Activated B cell treated with CpG ODN at 0.5 μM for 24 hours (primary cell): ENCODE measurements at regions of chr9 and their contacts with region 1.

Region 1: DNA sequence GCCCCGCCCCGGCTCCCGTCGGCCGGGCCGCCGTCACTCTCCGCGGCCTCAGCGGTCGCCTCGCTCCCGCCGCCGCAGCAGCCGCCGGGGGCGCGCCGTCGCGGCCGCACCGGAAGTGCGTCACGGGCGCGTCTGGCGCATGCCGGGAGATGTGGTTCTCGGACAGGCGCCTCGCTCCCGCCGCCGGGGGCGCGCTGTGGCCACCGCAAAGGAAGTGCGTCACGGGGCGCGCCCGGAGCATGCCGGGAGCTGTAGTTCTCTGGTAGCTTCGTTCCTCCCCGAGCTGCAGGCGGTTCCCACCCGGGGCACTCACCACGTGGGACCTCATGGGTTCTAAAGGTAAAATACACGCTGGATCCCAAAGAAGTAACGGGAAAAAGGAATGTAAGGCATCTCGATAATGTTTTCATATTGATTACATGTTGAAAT is at the start of gene UBAC1:
- DNase-seq: peak; percentile 99
- ATAC-seq: peak; percentile 91
- H3K4me3 Mint-ChIP-seq: peak within 1 kb of the TSS; percentile 87
- H3K27ac Mint-ChIP-seq: peak within 1 kb of the TSS; percentile 76
- H3K4me1 Mint-ChIP-seq: peaks cover 29% of the 10 kb centered on the region
- H3K27me3 Mint-ChIP-seq: peaks cover 9% of the 10 kb centered on the region
- CTCF ChIP-seq: no peak
- total RNA-seq, gene UBAC1: 24.3 and 25.5 TPM in 2 replicates

Region 2: GRCh38 chr9:135864447-135865049 is 96.7 kb before region 1 on chr9:
- CTCF ChIA-PET with region 1: interaction called, 9 read pairs
- POLR2A ChIA-PET with region 1: no interaction called
- intact Hi-C with region 1: loop called (anchors 2 kb)
- DNase-seq: peak; percentile 54
- ATAC-seq: peak; percentile 42
- H3K4me3 Mint-ChIP-seq: no peak overlapping the region
- H3K27ac Mint-ChIP-seq: no peak overlapping the region
- H3K4me1 Mint-ChIP-seq: peaks cover 7% of the 10 kb centered on the region
- H3K27me3 Mint-ChIP-seq: no peaks in the 10 kb centered on the region
- CTCF ChIP-seq: peak; percentile 36

Region 3: DNA sequence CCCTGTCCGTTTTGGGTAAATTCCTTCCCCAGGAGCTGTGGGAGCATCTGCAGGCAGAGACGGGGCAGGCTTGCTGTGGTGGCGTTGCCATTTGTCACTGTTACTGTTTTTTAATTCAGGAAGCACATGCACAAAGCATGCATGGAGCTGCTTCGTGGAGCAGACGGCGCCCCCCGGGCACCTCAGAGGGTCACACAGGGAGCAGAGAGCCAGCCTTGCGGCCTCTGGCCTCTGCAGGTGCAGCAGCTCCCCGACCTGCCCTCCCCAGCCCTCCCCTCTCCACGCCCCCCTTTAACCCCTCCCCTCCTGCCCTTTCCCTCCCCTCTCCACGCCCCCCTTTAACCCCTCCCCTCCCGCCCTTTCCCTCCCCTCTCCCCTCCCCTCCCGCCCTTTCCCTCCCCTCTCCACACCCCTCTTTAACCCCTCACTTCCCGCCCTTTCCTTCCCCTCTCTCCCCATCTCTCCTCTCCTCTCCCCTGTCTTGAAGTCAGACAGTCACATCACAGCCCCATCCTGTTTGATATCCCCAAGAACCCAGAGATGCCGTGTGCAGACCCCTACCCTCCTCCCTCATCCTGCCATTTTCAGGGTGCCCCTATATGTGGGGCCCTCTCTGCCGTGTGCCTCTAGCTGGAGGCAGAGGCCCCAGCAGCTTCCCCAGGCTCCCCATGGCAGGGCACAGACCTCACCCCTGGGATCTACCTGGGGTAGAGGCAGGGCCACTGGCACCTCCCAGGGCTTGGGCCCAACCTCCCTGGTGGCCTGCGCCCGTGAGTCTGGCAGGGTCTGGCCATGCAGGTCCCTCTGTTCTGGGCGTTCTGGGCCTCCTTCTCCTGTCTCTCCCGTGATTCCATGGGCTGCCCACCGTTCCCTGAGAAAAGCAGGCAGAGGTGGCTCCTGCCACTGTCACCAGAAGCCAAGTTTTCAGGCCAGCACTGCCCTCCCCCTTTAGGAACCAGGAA is 29.5 kb after region 1 on chr9:
- CTCF ChIA-PET with region 1: no interaction called
- POLR2A ChIA-PET with region 1: no interaction called
- intact Hi-C with region 1: loop called (anchors 2 kb)
- DNase-seq: no peak
- ATAC-seq: peak; percentile 77
- H3K4me3 Mint-ChIP-seq: peak overlapping the region; percentile 38
- H3K27ac Mint-ChIP-seq: peak overlapping the region; percentile 30
- H3K4me1 Mint-ChIP-seq: peaks cover 20% of the 10 kb centered on the region
- H3K27me3 Mint-ChIP-seq: no peaks in the 10 kb centered on the region
- CTCF ChIP-seq: no peak

Region 4: GRCh38 chr9:136267261-136268111 is 306.2 kb after region 1 on chr9:
- CTCF ChIA-PET with region 1: no interaction called
- POLR2A ChIA-PET with region 1: no interaction called
- intact Hi-C with region 1: loop called (anchors 5 kb)
- DNase-seq: peak; percentile 72
- ATAC-seq: peak; percentile 97
- H3K4me3 Mint-ChIP-seq: peak overlapping the region; percentile 80
- H3K27ac Mint-ChIP-seq: peak overlapping the region; percentile 70
- H3K4me1 Mint-ChIP-seq: peaks cover 11% of the 10 kb centered on the region
- H3K27me3 Mint-ChIP-seq: no peaks in the 10 kb centered on the region
- CTCF ChIP-seq: no peak

Region 5: DNA sequence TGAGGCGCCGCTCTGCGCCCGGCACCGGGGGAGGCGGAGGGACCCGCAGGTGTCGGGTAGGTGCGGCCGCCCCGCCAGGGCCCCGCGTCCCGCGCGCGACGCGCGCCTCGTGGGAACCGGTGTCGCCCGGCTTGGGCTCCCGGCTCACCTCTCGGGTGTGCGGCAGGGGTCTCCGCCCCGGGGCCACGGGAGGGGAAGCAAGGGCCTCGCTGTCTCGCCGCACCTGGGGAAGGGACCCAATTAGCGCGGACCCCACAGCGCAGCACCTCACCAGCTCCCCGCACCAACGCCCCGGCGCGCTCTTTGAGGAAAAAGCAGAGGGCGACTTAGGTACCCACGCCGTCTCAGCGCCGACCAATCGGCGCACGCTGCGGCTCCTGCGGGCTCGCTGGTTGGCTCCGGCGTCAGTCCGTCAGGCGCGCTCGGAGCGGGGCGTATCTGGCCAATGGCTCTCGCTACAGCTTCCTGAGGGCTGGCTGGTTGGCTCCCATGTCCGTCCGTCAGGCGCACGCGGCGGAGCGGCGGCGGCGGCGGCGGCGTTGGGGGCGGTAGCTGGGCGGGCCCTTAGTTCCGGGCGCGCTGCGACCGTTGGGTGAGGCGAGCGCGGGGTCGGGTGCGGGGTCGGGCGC is 924.8 kb after region 1 on chr9 and contains the start of gene TRAF2:
- CTCF ChIA-PET with region 1: no interaction called
- POLR2A ChIA-PET with region 1: no interaction called
- intact Hi-C with region 1: no loop called
- DNase-seq: peak; percentile 95
- ATAC-seq: peak; percentile 89
- H3K4me3 Mint-ChIP-seq: peak within 1 kb of the TSS; percentile 91
- H3K27ac Mint-ChIP-seq: peak within 1 kb of the TSS; percentile 88
- H3K4me1 Mint-ChIP-seq: peaks cover 44% of the 10 kb centered on the region
- H3K27me3 Mint-ChIP-seq: no peaks in the 10 kb centered on the region
- CTCF ChIP-seq: no peak
- total RNA-seq, gene TRAF2: 49.7 and 58.2 TPM in 2 replicates